ENCODE measurements at regions of chr1 and their contacts with region 1.

Region 1: DNA sequence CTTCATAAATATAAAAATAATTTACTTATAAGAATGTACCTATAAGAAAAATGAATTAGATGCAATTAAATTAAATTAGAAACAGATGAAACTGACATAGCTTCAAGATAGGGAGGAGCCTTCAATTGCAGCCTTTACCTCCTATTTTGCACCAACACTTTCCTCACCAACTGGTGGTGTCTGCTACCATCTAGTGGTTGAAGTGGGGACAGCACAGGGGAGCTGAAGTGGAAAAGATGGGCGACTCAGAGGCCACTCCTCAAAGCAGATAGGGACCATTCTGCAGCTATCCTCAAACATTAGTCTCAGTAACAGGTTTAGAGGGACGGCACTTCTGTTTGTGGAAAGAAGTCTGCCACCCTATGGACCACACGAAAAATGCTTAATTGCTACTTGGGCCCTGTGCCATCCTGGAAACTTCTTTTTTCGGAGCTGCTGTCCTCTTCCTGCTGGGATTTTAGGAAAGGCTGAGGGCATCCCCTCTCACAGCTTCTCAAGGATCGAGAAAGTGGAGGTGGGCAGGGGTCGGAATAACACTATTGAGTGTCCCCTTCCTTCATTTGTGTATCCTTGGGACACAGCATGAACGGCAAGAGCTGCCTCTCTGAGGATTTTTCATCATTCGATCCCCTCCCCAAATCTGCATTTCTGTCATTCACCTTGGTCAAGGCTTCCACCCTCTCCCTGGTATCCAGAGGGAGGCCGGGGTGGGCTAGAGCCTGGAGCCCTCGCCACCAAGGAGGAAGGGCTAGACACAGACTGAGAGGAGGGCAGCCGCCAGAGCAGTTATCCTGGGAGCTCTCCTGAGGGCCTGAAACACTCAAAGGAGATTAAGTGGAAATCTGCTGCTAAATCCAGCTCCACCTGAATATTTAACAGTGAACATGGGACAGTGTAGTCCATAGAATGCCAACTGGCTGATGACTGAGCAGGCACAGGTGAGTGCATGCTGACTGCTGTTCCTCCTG is 9.6 kb downstream of the PROK1 start:
- DNase-seq: peak; percentile 85
- H3K4me3 ChIP-seq: no peak overlapping the region
- H3K27ac ChIP-seq: no peak overlapping the region
- H3K4me1 ChIP-seq: no peaks in the 10 kb centered on the region
- H3K27me3 ChIP-seq: no peaks in the 10 kb centered on the region
- CTCF ChIP-seq: peak; percentile 96

Region 2: GRCh38 chr1:110196917-110197765 is 263.4 kb before region 1 on chr1:
- intact Hi-C with region 1: loop called (anchors 1 kb)
- DNase-seq: peak; percentile 32
- H3K4me3 ChIP-seq: no peak overlapping the region
- H3K27ac ChIP-seq: no peak overlapping the region
- H3K4me1 ChIP-seq: no peaks in the 10 kb centered on the region
- H3K27me3 ChIP-seq: no peaks in the 10 kb centered on the region
- CTCF ChIP-seq: peak; percentile 89

Measured in colonic mucosa (tissue), 4 donors.